CD14-positive monocyte (primary cell): ENCODE measurements at regions of chr2 and their contacts with region 1.

Region 1: DNA sequence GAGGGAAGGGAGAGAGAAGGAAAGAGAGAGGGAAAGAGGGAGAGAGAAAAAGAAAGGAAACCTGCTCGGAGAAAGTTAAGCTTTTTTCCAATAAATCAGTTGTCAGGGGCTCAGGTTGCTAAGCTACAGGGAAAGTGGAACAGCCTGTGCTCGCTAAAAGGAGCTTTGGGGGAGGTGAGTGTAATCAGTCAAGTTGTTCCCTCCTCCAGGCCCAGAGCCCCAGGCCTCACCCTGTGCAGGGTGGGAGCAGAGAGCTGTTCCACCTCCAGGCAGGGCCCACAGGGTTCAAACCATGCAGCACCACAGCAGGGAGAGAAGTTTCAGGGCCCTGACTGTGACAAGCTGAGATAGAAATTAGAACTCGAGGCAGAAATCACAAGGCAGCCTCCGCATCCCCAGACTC is 56.4 kb upstream of the PPP1CB start:
- DNase-seq: no peak
- H3K4me3 ChIP-seq: no peak overlapping the region
- H3K4me3 Mint-ChIP-seq: no peak overlapping the region
- H3K27ac ChIP-seq: no peak overlapping the region
- H3K27ac Mint-ChIP-seq: peak overlapping the region in 1 of 7 donors; percentile 39
- H3K4me1 ChIP-seq: no peaks in the 10 kb centered on the region
- H3K4me1 Mint-ChIP-seq: no peaks in the 10 kb centered on the region
- H3K27me3 ChIP-seq: no peaks in the 10 kb centered on the region
- H3K27me3 Mint-ChIP-seq: peaks cover 0 to 5% (median 3%) of the 10 kb centered on the region in 3 donors
- CTCF ChIP-seq: no peak

Region 2: GRCh38 chr2:28661589-28662001 is 33.7 kb before region 1 on chr2:
- intact Hi-C with region 1: loop called in 1 of 2 experiments (anchors 5 kb)
- DNase-seq: no peak
- H3K4me3 ChIP-seq: no peak overlapping the region
- H3K4me3 Mint-ChIP-seq: no peak overlapping the region
- H3K27ac ChIP-seq: no peak overlapping the region
- H3K27ac Mint-ChIP-seq: no peak overlapping the region
- H3K4me1 ChIP-seq: no peaks in the 10 kb centered on the region
- H3K4me1 Mint-ChIP-seq: peaks cover 5% of the 10 kb centered on the region
- H3K27me3 ChIP-seq: no peaks in the 10 kb centered on the region
- H3K27me3 Mint-ChIP-seq: peaks cover 0 to 2% (median 0%) of the 10 kb centered on the region in 3 donors
- CTCF ChIP-seq: no peak

Region 3: DNA sequence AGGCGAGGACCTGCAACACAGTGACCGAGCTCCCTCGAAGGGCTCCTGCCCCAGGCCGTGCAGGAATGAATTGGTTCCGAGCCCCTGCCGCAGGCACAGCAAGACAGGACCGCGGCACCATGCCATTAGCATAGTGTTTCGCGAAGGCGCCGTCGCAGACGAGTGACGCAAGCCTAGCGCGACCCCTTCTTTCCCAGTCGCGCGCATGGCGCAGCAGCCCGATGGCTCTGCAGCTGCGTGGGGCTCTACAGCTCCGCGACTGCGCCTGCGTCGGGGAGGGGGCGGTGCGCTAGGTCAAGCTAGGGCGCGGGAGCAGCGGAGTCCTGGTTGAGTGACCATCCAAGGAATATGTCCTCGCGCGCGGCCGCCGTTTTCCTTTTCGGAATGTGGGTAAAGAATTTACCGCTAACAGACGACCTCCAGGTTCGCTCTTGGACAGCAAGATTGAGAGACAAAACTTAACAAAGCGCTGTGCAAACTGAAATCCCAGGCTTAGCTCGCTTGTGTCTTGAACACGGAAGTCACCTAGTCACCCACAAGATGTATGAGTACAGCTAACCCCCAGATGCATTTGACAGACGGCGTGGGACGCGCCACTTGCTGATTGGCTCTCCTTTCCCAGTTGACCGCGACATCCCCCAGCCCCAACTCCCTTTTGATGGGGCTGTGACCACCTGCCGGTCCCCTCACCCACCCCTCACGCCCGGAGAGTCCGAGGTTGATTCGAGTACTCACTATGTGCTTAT is 175.1 kb after region 1 on chr2 and contains the start of gene TRMT61B:
- intact Hi-C with region 1: no loop called
- DNase-seq: peak; percentile 96
- H3K4me3 ChIP-seq: peak within 1 kb of the TSS; percentile 36 to 94 (median 77)
- H3K4me3 Mint-ChIP-seq: peak within 1 kb of the TSS; percentile 96 to 98
- H3K27ac ChIP-seq: peak within 1 kb of the TSS; percentile 69 to 94
- H3K27ac Mint-ChIP-seq: peak within 1 kb of the TSS; percentile 95 to 97 (median 96)
- H3K4me1 ChIP-seq: peaks cover 21 to 28% of the 10 kb centered on the region in 2 donors
- H3K4me1 Mint-ChIP-seq: peaks cover 28% of the 10 kb centered on the region
- H3K27me3 ChIP-seq: peaks cover 0 to under 1% of the 10 kb centered on the region in 2 donors
- H3K27me3 Mint-ChIP-seq: peaks cover 2 to 5% (median 3%) of the 10 kb centered on the region in 3 donors
- CTCF ChIP-seq: no peak
- polyA plus RNA-seq, gene TRMT61B: 6.7 to 10.2 (median 8.1) TPM